ENCODE measurements at regions of chr19 and their contacts with region 1.

Region 1: DNA sequence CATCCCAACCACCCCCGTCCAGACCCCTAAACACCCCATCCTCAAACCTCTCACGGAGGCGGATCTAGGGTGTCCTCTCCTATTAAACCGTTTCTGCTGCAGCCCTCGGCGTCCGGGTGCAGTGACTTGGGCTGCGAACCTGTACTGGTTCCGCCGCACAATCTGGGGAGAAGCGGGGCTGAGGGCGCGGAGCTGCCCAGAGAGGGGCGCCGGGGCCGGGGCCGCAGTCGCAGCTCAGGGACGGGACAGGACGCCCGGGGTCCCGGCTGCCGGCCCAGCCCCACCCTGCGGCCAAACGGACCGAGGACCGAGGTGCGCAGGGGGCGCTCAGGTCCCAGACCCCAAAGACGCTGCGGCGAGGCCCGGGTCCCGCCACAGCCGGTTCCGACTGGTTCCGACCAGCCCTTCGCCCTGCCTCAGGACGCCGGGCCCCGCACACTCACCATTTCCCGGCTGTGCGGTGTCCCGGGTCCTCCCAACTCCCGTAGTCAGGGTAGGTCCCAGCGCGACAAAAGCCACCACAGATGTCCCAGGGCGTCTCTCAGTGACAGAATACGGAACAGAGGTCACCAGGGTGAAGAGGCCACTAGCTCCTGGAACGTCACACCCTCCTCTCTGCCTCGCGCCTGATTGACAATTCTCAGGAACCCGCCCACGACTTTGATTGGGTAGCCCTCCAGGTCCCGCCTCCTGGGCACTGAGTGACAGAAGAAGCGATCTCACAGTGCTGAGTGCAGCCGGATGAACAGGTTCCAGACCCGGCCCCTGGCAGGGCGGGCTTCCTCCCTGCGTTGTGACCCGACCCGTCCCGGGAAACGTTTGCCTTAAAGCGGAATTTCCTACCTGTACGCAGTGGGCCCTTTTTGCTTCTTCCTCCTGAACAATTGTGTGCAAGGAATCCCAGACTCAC is at the start of gene ZNF44:
- DNase-seq: peak; percentile 97 to 99
- H3K4me3 ChIP-seq: peak within 1 kb of the TSS; percentile 76 to 80
- H3K27ac ChIP-seq: peak within 1 kb of the TSS; percentile 84
- H3K4me1 ChIP-seq: peaks cover 8 to 15% of the 10 kb centered on the region in 2 donors
- H3K27me3 ChIP-seq: no peaks in the 10 kb centered on the region
- CTCF ChIP-seq: no peak
- total RNA-seq, gene ZNF44: 10.4 TPM

Region 2: DNA sequence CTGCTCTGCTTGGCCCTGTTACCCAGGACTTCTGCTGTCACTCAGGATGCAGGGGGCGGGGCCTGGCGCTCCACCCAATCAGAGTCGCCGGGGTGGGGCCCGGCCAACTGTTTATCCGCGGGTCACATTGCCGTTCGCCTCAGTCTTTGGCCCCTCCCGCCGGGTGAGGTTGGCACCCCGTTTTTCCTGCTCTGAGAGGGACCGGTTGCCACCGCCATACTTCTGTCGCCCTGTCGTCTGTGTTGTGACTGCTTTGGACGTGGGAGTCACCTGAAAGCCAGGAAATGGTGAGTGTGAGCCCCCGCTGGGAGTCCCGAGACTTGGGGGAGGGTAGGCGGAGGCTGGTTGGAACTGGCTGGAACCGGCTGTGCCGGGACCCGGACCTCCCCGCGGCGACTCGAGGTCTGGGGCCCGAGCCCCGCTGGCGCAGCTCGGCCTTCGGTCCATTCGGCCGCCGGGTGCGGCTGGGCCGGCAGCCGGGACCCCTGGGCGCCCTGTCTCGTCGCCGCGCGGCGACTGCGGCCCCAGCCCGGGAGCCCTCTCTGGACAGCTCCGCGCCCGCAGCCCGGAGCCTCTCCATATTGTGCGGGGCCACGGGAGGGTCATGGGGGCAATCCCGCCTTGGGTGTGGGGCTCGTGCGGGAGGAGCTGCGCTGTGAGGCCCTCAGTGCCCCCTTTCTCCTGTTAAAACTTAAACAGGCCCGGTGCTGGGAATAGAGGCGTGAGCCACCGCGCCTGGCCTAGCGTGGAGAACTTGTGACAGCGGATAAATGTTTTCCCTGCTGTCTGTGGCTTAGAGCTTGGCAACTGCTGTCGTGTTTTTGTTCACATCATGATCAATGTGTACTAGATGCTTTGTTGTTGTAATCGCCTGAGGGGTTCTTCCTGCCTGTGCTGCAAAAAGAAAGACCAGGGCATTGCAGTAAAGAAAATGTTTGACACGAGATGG is 229.6 kb before region 1 on chr19 and contains the start of gene ZNF844:
- intact Hi-C with region 1: loop called (anchors 10 kb)
- DNase-seq: peak; percentile 95 to 98
- H3K4me3 ChIP-seq: peak within 1 kb of the TSS; percentile 84 to 85
- H3K27ac ChIP-seq: peak within 1 kb of the TSS; percentile 87 to 93
- H3K4me1 ChIP-seq: peaks cover 3 to 7% of the 10 kb centered on the region in 2 donors
- H3K27me3 ChIP-seq: no peaks in the 10 kb centered on the region
- CTCF ChIP-seq: no peak
- total RNA-seq, gene ZNF844: 8.0 TPM

Region 3: GRCh38 chr19:12162882-12163806 is 131.4 kb before region 1 on chr19 and contains the start of gene ZNF136:
- intact Hi-C with region 1: loop called (anchors 5 kb)
- DNase-seq: peak; percentile 89 to 96
- H3K4me3 ChIP-seq: peak within 1 kb of the TSS; percentile 83 to 84
- H3K27ac ChIP-seq: peak within 1 kb of the TSS; percentile 90 to 94
- H3K4me1 ChIP-seq: peaks cover 0 to 12% of the 10 kb centered on the region in 2 donors
- H3K27me3 ChIP-seq: no peaks in the 10 kb centered on the region
- CTCF ChIP-seq: no peak
- total RNA-seq, gene ZNF136: 1.9 TPM

Region 4: GRCh38 chr19:12365236-12366162 is 71.0 kb after region 1 on chr19 and contains the start of gene ZNF442:
- intact Hi-C with region 1: loop called (anchors 1 kb)
- DNase-seq: peak; percentile 84 to 98
- H3K4me3 ChIP-seq: peak within 1 kb of the TSS; percentile 79 to 91
- H3K27ac ChIP-seq: peak within 1 kb of the TSS; percentile 90 to 94
- H3K4me1 ChIP-seq: peaks cover 0 to 3% of the 10 kb centered on the region in 2 donors
- H3K27me3 ChIP-seq: no peaks in the 10 kb centered on the region
- CTCF ChIP-seq: peak; percentile 63 to 75 (median 65)
- total RNA-seq, gene ZNF442: 0.21 TPM

Region 5: GRCh38 chr19:12440541-12441316 is 146.2 kb after region 1 on chr19 and contains the start of gene ZNF443:
- intact Hi-C with region 1: loop called (anchors 2 kb)
- DNase-seq: peak; percentile 99
- H3K4me3 ChIP-seq: peak within 1 kb of the TSS; percentile 77 to 81
- H3K27ac ChIP-seq: peak within 1 kb of the TSS; percentile 80 to 81
- H3K4me1 ChIP-seq: no peaks in the 10 kb centered on the region
- H3K27me3 ChIP-seq: no peaks in the 10 kb centered on the region
- CTCF ChIP-seq: peak in 1 of 3 experiments; percentile 17
- total RNA-seq, gene ZNF443: 4.0 TPM

Region 6: DNA sequence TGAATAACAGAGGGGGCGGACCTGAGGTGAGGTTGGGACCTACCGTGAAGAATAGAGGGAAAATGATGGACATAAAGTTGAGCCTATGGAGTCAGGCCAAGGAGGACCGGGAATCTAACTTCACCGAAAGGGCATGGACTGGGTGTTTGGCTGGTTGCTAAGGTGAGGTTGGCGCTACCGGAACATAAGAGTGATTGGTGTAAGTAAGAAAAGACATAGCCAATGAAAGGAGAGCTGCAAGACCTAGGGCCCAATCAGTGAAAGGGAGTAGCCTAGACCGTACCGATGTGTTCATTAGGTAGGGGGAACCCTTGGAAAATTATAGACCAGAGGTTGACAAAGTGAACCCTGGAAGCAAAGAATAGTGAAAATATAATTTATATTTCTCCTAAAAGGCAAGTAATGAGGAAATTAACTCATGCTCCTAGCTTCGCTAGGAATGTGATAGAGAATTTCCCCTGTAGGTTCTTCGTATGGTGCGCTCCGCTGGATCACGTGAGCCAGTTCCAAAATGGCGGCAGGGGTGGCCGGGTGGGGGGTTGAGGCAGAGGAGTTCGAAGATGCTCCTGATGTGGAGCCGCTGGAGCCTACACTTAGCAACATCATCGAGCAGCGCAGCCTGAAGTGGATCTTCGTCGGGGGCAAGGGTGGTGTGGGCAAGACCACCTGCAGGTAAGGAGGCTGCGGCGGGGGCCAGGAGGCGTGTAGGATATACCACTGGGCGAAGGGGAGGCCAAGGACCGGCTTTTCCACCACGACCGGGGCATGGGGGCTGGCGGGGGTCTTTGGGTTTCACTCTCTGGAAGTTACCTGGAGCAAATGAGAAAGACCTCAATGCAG is 442.7 kb after region 1 on chr19 and contains the start of gene GET3:
- intact Hi-C with region 1: loop called (anchors 10 kb)
- DNase-seq: peak; percentile 93 to 98
- H3K4me3 ChIP-seq: peak within 1 kb of the TSS; percentile 70 to 80
- H3K27ac ChIP-seq: peak within 1 kb of the TSS; percentile 78 to 90
- H3K4me1 ChIP-seq: peaks cover 20 to 28% of the 10 kb centered on the region in 2 donors
- H3K27me3 ChIP-seq: no peaks in the 10 kb centered on the region
- CTCF ChIP-seq: peak in 2 of 3 experiments; percentile 5 to 15
- total RNA-seq, gene GET3: 43.6 TPM

Measured in ascending aorta (tissue), 2 donors.